CD4-positive, alpha-beta memory T cell (primary cell): ENCODE measurements at regions of chr7 and their contacts with region 1.

Region 1: DNA sequence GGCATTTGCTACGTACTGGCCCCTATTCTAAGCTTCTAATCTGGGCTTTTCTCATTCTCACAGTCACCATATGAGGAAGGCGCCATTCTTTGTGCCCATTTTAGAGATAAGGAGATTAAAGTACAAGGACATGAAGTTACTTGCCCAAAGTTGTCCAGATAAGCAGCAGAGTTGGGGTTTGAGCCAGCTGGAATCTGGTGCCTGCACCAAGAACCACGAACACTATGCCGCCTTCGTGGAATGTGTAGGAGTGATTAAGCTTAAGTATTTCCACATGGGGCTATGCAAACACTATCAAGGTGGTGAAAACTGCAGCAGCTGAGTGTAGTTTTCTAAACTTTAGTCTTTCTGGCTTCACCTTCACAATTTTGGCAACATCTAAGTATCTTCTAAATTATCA is 342.7 kb upstream of the ETV1 start:
- DNase-seq: no peak
- H3K4me3 ChIP-seq: no peak overlapping the region
- H3K4me3 Mint-ChIP-seq: no peak overlapping the region
- H3K27ac ChIP-seq: no peak overlapping the region
- H3K27ac Mint-ChIP-seq: no peak overlapping the region
- H3K4me1 ChIP-seq: no peaks in the 10 kb centered on the region
- H3K4me1 Mint-ChIP-seq: no peaks in the 10 kb centered on the region
- H3K27me3 ChIP-seq: no peaks in the 10 kb centered on the region
- H3K27me3 Mint-ChIP-seq: peaks cover 0 to 1% of the 10 kb centered on the region in 2 donors

Region 2: GRCh38 chr7:14766747-14767146 is 434.6 kb after region 1 on chr7:
- CTCF ChIA-PET with region 1: no interaction called
- POLR2A ChIA-PET with region 1: no interaction called
- intact Hi-C with region 1: loop called (anchors 5 kb)
- DNase-seq: no peak
- H3K4me3 ChIP-seq: no peak overlapping the region
- H3K4me3 Mint-ChIP-seq: no peak overlapping the region
- H3K27ac ChIP-seq: no peak overlapping the region
- H3K27ac Mint-ChIP-seq: no peak overlapping the region
- H3K4me1 ChIP-seq: no peaks in the 10 kb centered on the region
- H3K4me1 Mint-ChIP-seq: no peaks in the 10 kb centered on the region
- H3K27me3 ChIP-seq: no peaks in the 10 kb centered on the region
- H3K27me3 Mint-ChIP-seq: no peaks in the 10 kb centered on the region